Panc1 (cell line): ENCODE measurements at regions of chr13 and their contacts with region 1.

Region 1: DNA sequence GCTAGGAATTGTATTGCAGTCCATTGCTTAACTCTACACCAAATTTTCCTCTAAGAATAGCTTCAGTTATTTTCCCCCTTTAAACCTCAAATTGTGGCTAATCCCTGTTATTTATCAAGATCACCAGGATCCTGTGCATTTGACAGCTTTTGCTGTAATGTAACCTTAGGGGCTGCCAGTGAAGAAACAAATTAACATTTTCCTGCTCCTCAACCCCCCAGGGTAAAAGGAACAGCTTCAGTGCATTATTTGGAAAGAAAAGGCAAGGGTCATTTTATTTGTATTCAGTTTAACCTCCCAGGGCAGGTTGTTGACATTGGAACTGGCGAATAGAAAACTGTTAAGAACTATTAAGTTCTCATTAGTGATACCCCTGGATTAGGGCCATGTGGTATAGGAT is 57.0 kb downstream of the PCDH20 start:
- DNase-seq: no peak
- ATAC-seq: no peak
- H3K4me3 ChIP-seq: no peak overlapping the region
- H3K27ac ChIP-seq: no peak overlapping the region
- H3K4me1 ChIP-seq: no peaks in the 10 kb centered on the region
- H3K27me3 ChIP-seq: no peaks in the 10 kb centered on the region
- CTCF ChIP-seq: no peak

Region 2: DNA sequence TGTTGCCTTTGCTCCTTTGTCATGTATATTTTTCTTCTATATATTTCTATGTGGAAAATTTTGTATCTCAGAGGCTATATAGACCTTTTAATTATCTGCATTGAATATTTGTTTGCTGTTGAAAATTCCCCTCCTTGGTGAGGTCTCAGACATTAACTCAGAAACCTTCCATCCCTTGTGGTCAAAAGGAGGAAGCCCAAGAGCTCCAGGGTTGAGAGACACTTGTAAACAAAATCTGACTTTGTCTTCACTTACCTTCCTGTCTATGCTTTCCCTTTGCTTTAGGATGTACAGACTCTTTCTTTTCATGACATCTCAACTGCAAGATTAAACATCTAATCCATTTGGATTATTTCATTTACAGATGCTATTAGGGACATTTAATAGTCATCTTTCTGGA is 100.4 kb before region 1 on chr13:
- CTCF ChIA-PET with region 1: no interaction called
- POLR2A ChIA-PET with region 1: interaction called, 16 read pairs
- in situ Hi-C with region 1: no loop called
- intact Hi-C with region 1: no loop called
- DNase-seq: no peak
- ATAC-seq: no peak
- H3K4me3 ChIP-seq: no peak overlapping the region
- H3K27ac ChIP-seq: no peak overlapping the region
- H3K4me1 ChIP-seq: no peaks in the 10 kb centered on the region
- H3K27me3 ChIP-seq: no peaks in the 10 kb centered on the region
- CTCF ChIP-seq: no peak